ENCODE measurements at regions of chr10 and their contacts with region 1.

Region 1: DNA sequence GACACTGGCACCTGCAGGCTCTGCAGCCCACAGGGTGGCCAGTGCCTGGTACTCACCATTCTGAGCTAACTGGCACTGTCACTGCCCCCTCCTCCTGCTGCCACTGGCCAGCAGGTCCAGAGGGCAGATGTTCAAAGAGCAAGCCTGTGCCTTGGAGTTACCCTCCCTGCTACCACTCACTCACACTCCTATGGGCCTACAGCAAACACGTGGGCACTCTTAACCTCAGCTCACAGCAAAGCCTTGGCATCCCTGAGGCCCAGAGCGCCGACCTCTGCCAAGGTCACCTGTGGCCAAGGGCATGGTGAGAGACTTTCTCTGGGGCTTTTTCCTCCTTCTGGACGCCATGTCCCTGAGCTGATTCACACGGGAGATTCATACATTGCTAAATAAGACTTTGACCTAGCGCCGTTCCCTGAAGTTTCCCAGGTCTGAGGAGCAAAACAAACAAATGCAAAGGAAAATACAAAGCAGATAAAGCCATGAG is 270.0 kb upstream of the PPP2R2D start:
- DNase-seq: no peak
- H3K4me3 Mint-ChIP-seq: no peak overlapping the region
- H3K27ac Mint-ChIP-seq: no peak overlapping the region
- H3K4me1 Mint-ChIP-seq: peaks cover 13% of the 10 kb centered on the region
- H3K27me3 Mint-ChIP-seq: no peaks in the 10 kb centered on the region
- CTCF ChIP-seq: no peak

Region 2: GRCh38 chr10:131437556-131438475 is 193.0 kb before region 1 on chr10:
- CTCF ChIA-PET with region 1: no interaction called
- intact Hi-C with region 1: no loop called
- DNase-seq: no peak
- H3K4me3 Mint-ChIP-seq: no peak overlapping the region
- H3K27ac Mint-ChIP-seq: no peak overlapping the region
- H3K4me1 Mint-ChIP-seq: no peaks in the 10 kb centered on the region
- H3K27me3 Mint-ChIP-seq: peaks cover 79% of the 10 kb centered on the region
- CTCF ChIP-seq: no peak

Region 3: GRCh38 chr10:131641231-131641630 is 10.4 kb after region 1 on chr10:
- CTCF ChIA-PET with region 1: no interaction called
- intact Hi-C with region 1: loop called (anchors 1 kb)
- DNase-seq: peak; percentile 79
- H3K4me3 Mint-ChIP-seq: no peak overlapping the region
- H3K27ac Mint-ChIP-seq: peak overlapping the region; percentile 90
- H3K4me1 Mint-ChIP-seq: peaks cover 9% of the 10 kb centered on the region
- H3K27me3 Mint-ChIP-seq: no peaks in the 10 kb centered on the region
- CTCF ChIP-seq: no peak